Mammary epithelial cell (primary cell): ENCODE measurements at regions of chr11 and their contacts with region 1.

Region 1: DNA sequence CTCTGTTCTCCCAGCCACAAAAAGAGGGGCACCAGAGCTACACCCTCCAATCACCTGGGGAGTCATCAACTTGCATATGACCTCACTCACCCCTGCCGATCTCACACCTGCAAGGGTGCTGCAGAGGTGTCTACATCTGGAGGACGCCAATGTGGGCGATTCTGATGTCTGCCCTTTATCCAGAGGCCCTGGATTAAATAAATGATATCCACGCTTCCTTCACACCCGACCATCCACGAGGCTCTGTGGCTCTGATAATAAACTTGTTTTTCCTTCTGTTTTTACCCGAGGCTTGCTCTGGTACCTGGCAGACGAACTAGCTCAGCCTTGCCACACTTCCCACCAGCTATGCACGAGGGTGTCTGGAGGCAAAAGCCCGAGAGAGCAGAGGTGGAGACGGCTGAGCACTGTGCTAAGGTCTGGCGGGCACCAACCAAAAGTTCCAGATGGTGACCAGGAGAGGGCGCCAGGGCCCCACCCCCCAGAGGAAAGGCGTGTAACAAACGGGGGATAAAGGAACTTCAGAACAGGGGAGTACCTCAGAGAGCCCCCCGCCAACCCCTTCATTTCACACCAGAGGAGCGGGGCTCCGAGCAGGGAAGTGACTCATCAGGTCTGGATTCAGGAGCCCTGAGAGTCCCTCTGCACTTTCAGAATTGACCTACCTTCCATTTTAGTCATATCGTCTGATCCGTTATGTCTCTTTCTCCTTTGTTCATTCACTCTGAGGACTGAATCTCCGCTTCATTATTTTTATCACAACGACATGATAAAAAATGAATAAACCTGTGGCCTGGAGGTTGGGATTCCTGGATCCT is 13.5 kb downstream of the SCN3B start:
- DNase-seq: peak; percentile 24
- H3K4me3 ChIP-seq: no peak overlapping the region
- H3K27ac ChIP-seq: no peak overlapping the region
- H3K4me1 ChIP-seq: no peaks in the 10 kb centered on the region
- H3K27me3 ChIP-seq: no peaks in the 10 kb centered on the region
- CTCF ChIP-seq: peak; percentile 72 to 98

Region 2: GRCh38 chr11:123316003-123316402 is 324.9 kb before region 1 on chr11:
- CTCF ChIA-PET with region 1: no interaction called
- dilution Hi-C with region 1: no loop called
- in situ Hi-C with region 1: no loop called
- intact Hi-C with region 1: no loop called
- DNase-seq: no peak
- H3K4me3 ChIP-seq: no peak overlapping the region
- H3K27ac ChIP-seq: no peak overlapping the region
- H3K4me1 ChIP-seq: no peaks in the 10 kb centered on the region
- H3K27me3 ChIP-seq: no peaks in the 10 kb centered on the region
- CTCF ChIP-seq: no peak

Region 3: DNA sequence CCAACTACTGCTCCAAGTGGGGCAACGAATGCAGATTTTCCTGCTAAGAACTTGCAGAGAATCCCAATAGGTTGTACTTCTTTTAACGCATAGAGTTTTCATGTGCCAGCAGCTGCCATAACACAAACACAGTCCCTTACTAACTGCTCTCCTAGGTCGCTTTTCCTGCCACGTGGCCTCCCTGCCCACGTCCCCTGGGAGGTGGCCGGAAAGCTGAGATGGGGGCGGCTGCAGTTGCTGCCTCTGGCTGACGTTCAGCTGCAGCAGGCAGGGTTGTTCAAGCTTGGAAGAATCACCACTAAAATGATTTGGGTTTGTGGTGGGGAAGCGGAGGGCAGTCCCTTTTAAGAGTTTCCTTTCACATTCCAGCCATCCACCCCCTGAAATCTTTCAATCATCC is 61.3 kb after region 1 on chr11:
- CTCF ChIA-PET with region 1: interaction called, 9 read pairs
- dilution Hi-C with region 1: loop called (anchors 5 kb)
- in situ Hi-C with region 1: loop called (anchors 5 kb)
- intact Hi-C with region 1: loop called (anchors 1 kb)
- DNase-seq: no peak
- H3K4me3 ChIP-seq: no peak overlapping the region
- H3K27ac ChIP-seq: no peak overlapping the region
- H3K4me1 ChIP-seq: peaks cover 3% of the 10 kb centered on the region
- H3K27me3 ChIP-seq: no peaks in the 10 kb centered on the region
- CTCF ChIP-seq: no peak